ENCODE measurements at regions of chr2 and their contacts with region 1.

Region 1: GRCh38 chr2:20027705-20028434 is 15.4 kb upstream of the MATN3 start:
- DNase-seq: peak; percentile 89
- H3K4me3 ChIP-seq: peak overlapping the region in 1 of 3 experiments; percentile 3
- H3K27ac ChIP-seq: peak overlapping the region; percentile 74
- H3K4me1 ChIP-seq: peaks cover 21% of the 10 kb centered on the region
- H3K27me3 ChIP-seq: no peaks in the 10 kb centered on the region
- CTCF ChIP-seq: no peak
- POLR2A ChIP-seq: no peak

Region 2: GRCh38 chr2:20040489-20041172 is 12.8 kb after region 1 on chr2:
- CTCF ChIA-PET with region 1: interaction called, 10 read pairs
- POLR2A ChIA-PET with region 1: no interaction called
- dilution Hi-C with region 1: no loop called
- intact Hi-C with region 1: loop called (anchors 1 kb)
- DNase-seq: peak; percentile 85
- H3K4me3 ChIP-seq: no peak overlapping the region
- H3K27ac ChIP-seq: peak overlapping the region; percentile 7
- H3K4me1 ChIP-seq: peaks cover 53% of the 10 kb centered on the region
- H3K27me3 ChIP-seq: no peaks in the 10 kb centered on the region
- CTCF ChIP-seq: no peak
- POLR2A ChIP-seq: no peak

Region 3: GRCh38 chr2:20097879-20098714 is 70.2 kb after region 1 on chr2:
- CTCF ChIA-PET with region 1: interaction called, 16 read pairs
- POLR2A ChIA-PET with region 1: no interaction called
- dilution Hi-C with region 1: no loop called
- intact Hi-C with region 1: no loop called
- DNase-seq: peak; percentile 94
- H3K4me3 ChIP-seq: no peak overlapping the region
- H3K27ac ChIP-seq: no peak overlapping the region
- H3K4me1 ChIP-seq: peaks cover 4% of the 10 kb centered on the region
- H3K27me3 ChIP-seq: no peaks in the 10 kb centered on the region
- CTCF ChIP-seq: peak; percentile 86 to 93
- POLR2A ChIP-seq: no peak

Measured in endothelial cell of umbilical vein (primary cell).